CD8-positive, alpha-beta T cell (primary cell): ENCODE measurements at regions of chr13 and their contacts with region 1.

Region 1: GRCh38 chr13:20828539-20829364 is 55.0 kb upstream of the EEF1AKMT1 start:
- DNase-seq: peak in 6 of 9 experiments; percentile 5 to 81 (median 36)
- ATAC-seq: peak; percentile 94
- H3K4me3 ChIP-seq: peak overlapping the region in 1 of 2 experiments; percentile 10
- H3K4me3 Mint-ChIP-seq: peak overlapping the region; percentile 44
- H3K27ac ChIP-seq: no peak overlapping the region
- H3K27ac Mint-ChIP-seq: peak overlapping the region; percentile 70
- H3K4me1 ChIP-seq: no peaks in the 10 kb centered on the region
- H3K4me1 Mint-ChIP-seq: peaks cover 7% of the 10 kb centered on the region
- H3K27me3 ChIP-seq: no peaks in the 10 kb centered on the region
- H3K27me3 Mint-ChIP-seq: no peaks in the 10 kb centered on the region
- CTCF ChIP-seq: peak; percentile 71

Region 2: GRCh38 chr13:20197361-20197834 is 631.4 kb before region 1 on chr13:
- CTCF ChIA-PET with region 1: interaction called, 5 read pairs
- POLR2A ChIA-PET with region 1: no interaction called
- intact Hi-C with region 1: loop called (anchors 2 to 5 kb)
- DNase-seq: peak in 4 of 9 experiments; percentile 24 to 71 (median 46)
- ATAC-seq: peak; percentile 76
- H3K4me3 ChIP-seq: no peak overlapping the region
- H3K4me3 Mint-ChIP-seq: no peak overlapping the region
- H3K27ac ChIP-seq: no peak overlapping the region
- H3K27ac Mint-ChIP-seq: no peak overlapping the region
- H3K4me1 ChIP-seq: peaks cover 16% of the 10 kb centered on the region
- H3K4me1 Mint-ChIP-seq: peaks cover 18% of the 10 kb centered on the region
- H3K27me3 ChIP-seq: peaks cover 21 to 38% of the 10 kb centered on the region in 2 experiments
- H3K27me3 Mint-ChIP-seq: peaks cover 42% of the 10 kb centered on the region
- CTCF ChIP-seq: peak; percentile 78

Region 3: GRCh38 chr13:20713751-20714150 is 115.0 kb before region 1 on chr13:
- CTCF ChIA-PET with region 1: interaction called, 24 read pairs
- POLR2A ChIA-PET with region 1: no interaction called
- intact Hi-C with region 1: loop called (anchors 1 kb)
- DNase-seq: no peak
- ATAC-seq: no peak
- H3K4me3 ChIP-seq: no peak overlapping the region
- H3K4me3 Mint-ChIP-seq: no peak overlapping the region
- H3K27ac ChIP-seq: no peak overlapping the region
- H3K27ac Mint-ChIP-seq: no peak overlapping the region
- H3K4me1 ChIP-seq: peaks cover 4% of the 10 kb centered on the region
- H3K4me1 Mint-ChIP-seq: peaks cover 8% of the 10 kb centered on the region
- H3K27me3 ChIP-seq: no peaks in the 10 kb centered on the region
- H3K27me3 Mint-ChIP-seq: peaks cover 2% of the 10 kb centered on the region
- CTCF ChIP-seq: no peak

Region 4: GRCh38 chr13:20843166-20843565 is 14.4 kb after region 1 on chr13:
- CTCF ChIA-PET with region 1: interaction called, 26 read pairs
- POLR2A ChIA-PET with region 1: interaction called, 4 read pairs
- intact Hi-C with region 1: no loop called
- DNase-seq: no peak
- ATAC-seq: no peak
- H3K4me3 ChIP-seq: no peak overlapping the region
- H3K4me3 Mint-ChIP-seq: no peak overlapping the region
- H3K27ac ChIP-seq: no peak overlapping the region
- H3K27ac Mint-ChIP-seq: no peak overlapping the region
- H3K4me1 ChIP-seq: no peaks in the 10 kb centered on the region
- H3K4me1 Mint-ChIP-seq: no peaks in the 10 kb centered on the region
- H3K27me3 ChIP-seq: no peaks in the 10 kb centered on the region
- H3K27me3 Mint-ChIP-seq: no peaks in the 10 kb centered on the region
- CTCF ChIP-seq: no peak

Region 5: GRCh38 chr13:21894091-21894490 is 1065.3 kb after region 1 on chr13:
- CTCF ChIA-PET with region 1: no interaction called
- POLR2A ChIA-PET with region 1: no interaction called
- intact Hi-C with region 1: no loop called
- DNase-seq: no peak
- ATAC-seq: no peak
- H3K4me3 ChIP-seq: no peak overlapping the region
- H3K4me3 Mint-ChIP-seq: no peak overlapping the region
- H3K27ac ChIP-seq: no peak overlapping the region
- H3K27ac Mint-ChIP-seq: no peak overlapping the region
- H3K4me1 ChIP-seq: no peaks in the 10 kb centered on the region
- H3K4me1 Mint-ChIP-seq: peaks cover 2% of the 10 kb centered on the region
- H3K27me3 ChIP-seq: no peaks in the 10 kb centered on the region
- H3K27me3 Mint-ChIP-seq: peaks cover 2% of the 10 kb centered on the region
- CTCF ChIP-seq: no peak